ENCODE measurements at regions of chr10 and their contacts with region 1.

Region 1: DNA sequence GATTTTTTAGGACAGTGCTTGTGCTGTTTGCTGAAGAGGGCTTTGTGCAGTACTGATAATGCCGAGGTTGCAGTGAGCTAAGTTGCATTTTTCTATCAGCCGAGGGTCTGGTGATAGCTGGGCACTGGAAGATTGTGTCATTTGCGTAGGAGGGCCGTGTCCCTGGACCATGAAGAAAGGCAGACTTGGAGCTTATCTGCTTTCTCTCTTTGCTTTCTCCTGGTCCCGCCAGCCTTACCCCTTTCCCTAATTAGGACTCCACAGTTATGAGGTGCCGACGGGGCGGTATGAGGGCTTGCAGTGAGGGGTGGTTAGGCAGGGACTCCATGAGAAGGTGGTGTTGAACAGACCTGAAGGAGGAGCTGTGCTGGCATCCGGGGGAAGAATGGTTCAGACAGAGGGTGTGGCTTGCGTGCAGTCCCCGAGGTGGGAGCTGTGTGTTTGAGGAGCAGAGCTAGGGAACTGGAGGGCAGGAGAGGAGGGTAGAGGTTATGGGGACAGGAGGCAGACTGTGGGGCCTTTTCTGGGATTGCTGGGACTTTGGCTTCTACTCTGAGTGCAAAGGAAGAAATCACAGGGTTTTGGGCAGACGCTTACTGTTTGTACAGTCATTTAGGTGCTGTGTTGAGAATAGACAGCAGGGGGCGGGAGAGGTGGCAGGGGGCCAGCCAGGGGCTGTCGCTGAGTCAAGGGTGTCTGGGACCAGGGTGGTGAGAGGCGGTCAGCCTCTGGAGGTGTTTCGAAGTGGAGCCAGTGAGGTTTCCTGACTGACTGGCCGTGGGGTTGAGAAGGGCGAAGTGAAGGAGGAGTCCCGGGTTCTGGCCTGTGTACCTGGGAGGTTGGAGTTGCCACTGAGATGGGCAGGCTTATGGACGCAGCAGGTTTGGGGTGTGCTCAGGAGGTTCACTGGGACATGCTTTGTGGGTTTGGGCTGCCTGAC is 43.4 kb downstream of the PRF1 start:
- DNase-seq: peak; percentile 50 to 88 (median 76)
- ATAC-seq: peak; percentile 95
- H3K4me3 ChIP-seq: peak overlapping the region; percentile 44 to 52
- H3K4me3 Mint-ChIP-seq: peak overlapping the region; percentile 81
- H3K27ac ChIP-seq: peak overlapping the region in 1 of 2 experiments; percentile 46
- H3K27ac Mint-ChIP-seq: peak overlapping the region; percentile 78
- H3K4me1 ChIP-seq: peaks cover 15% of the 10 kb centered on the region
- H3K4me1 Mint-ChIP-seq: peaks cover 20% of the 10 kb centered on the region
- H3K27me3 ChIP-seq: no peaks in the 10 kb centered on the region
- H3K27me3 Mint-ChIP-seq: no peaks in the 10 kb centered on the region
- CTCF ChIP-seq: peak; percentile 84

Region 2: GRCh38 chr10:69874449-69874848 is 684.7 kb before region 1 on chr10:
- CTCF ChIA-PET with region 1: no interaction called
- POLR2A ChIA-PET with region 1: no interaction called
- intact Hi-C with region 1: no loop called
- DNase-seq: no peak
- ATAC-seq: no peak
- H3K4me3 ChIP-seq: no peak overlapping the region
- H3K4me3 Mint-ChIP-seq: no peak overlapping the region
- H3K27ac ChIP-seq: no peak overlapping the region
- H3K27ac Mint-ChIP-seq: no peak overlapping the region
- H3K4me1 ChIP-seq: no peaks in the 10 kb centered on the region
- H3K4me1 Mint-ChIP-seq: no peaks in the 10 kb centered on the region
- H3K27me3 ChIP-seq: no peaks in the 10 kb centered on the region
- H3K27me3 Mint-ChIP-seq: peaks cover 8% of the 10 kb centered on the region
- CTCF ChIP-seq: no peak

Region 3: DNA sequence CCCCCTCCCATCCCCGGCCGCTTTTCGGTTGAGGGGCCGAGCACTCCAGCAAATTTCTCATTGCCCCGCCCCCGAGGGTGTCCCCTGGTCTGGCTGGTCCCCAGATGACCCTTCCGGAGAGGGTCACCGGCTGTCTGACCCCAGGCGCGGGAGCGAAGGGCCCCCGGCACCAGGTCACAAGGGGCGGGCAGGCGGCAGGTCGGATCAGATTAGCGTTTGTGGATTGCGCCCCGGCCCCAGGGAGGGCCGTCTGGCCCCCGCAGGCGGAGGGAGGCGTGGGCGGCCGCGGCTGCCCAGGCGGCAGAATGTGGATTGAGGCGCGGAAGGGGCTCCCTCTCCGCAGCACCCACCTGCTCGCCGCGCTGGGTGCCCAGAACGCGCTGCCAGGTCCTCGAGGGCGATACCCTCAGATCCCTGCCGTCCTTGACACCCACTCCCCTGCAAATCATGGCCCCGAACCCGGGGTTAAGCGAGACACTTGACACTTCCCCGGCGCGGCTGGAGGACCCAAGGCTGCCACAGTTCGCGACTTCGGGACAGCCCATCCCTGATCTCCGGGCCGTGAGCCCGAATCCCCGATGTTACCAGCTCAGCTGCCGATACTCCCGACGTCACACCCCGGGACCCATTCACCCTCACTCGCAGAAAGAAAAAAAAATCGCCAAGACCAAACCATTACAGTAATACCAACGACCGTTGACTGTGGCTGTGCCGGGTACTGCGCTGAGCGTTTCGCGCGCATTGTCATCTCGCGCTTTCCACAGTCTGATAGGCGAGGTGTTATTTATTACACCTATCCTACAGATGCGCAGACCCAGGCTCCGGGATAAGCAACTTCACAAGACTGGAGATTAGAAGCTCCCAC is 118.6 kb before region 1 on chr10:
- CTCF ChIA-PET with region 1: no interaction called
- POLR2A ChIA-PET with region 1: no interaction called
- intact Hi-C with region 1: no loop called
- DNase-seq: no peak
- ATAC-seq: peak; percentile 46
- H3K4me3 ChIP-seq: peak overlapping the region in 1 of 2 experiments; percentile 33
- H3K4me3 Mint-ChIP-seq: peak overlapping the region; percentile 76
- H3K27ac ChIP-seq: no peak overlapping the region
- H3K27ac Mint-ChIP-seq: no peak overlapping the region
- H3K4me1 ChIP-seq: peaks cover 18% of the 10 kb centered on the region
- H3K4me1 Mint-ChIP-seq: peaks cover 15% of the 10 kb centered on the region
- H3K27me3 ChIP-seq: peaks cover 13 to 19% of the 10 kb centered on the region in 2 experiments
- H3K27me3 Mint-ChIP-seq: peaks cover 38% of the 10 kb centered on the region
- CTCF ChIP-seq: no peak

Region 4: DNA sequence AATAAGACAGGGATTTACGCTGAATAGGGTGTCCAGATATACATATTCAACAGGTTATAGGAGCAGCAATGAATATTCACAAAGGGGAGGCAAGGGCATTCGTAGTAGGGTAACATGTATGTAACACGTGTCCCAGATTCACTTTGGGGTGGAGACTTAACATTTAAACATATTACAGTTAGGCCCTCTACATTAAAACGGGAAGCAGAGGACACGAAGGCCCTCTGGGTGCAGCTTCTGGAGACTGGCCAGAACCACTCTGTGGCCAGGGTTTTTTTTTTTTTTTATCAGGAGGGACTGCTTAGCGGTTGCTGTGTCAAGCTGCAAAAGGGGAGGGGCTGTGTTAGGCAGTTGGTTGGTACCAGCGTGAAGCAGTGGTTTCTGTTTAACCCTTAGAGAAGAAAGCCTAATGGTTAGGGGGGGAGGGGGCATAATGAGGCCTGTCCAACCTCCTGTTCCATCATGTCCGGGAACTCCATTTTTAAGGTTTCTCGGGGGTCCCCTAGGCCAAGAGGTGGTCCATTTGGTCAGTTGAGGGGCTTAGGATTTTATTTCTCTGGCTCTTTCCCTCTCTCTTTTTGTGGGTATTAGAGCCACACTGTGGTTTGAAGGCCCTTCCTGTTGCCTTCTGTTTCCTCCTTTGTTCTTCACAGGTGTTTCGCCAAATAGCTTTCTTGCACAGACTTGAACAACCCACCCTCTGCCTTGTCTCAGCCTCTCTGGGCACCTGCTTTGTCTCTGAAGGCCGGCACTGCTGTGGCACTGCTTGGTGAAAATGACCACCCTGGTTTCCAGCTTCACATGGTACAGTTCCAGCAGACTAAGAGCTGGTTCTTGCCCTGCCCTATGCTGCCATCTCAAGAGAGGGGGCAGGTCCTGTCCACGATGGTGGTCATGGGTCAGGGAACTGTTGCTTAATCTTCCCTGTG is 17.0 kb after region 1 on chr10:
- CTCF ChIA-PET with region 1: interaction called, 32 read pairs
- POLR2A ChIA-PET with region 1: interaction called, 5 read pairs
- intact Hi-C with region 1: loop called in 1 of 2 experiments (anchors 1 kb)
- DNase-seq: peak in 3 of 9 experiments; percentile 48 to 79 (median 71)
- ATAC-seq: peak; percentile 6
- H3K4me3 ChIP-seq: peak overlapping the region in 1 of 2 experiments; percentile 19
- H3K4me3 Mint-ChIP-seq: peak overlapping the region; percentile 37
- H3K27ac ChIP-seq: peak overlapping the region in 1 of 2 experiments; percentile 54
- H3K27ac Mint-ChIP-seq: peak overlapping the region; percentile 84
- H3K4me1 ChIP-seq: peaks cover 45% of the 10 kb centered on the region
- H3K4me1 Mint-ChIP-seq: peaks cover 46% of the 10 kb centered on the region
- H3K27me3 ChIP-seq: no peaks in the 10 kb centered on the region
- H3K27me3 Mint-ChIP-seq: no peaks in the 10 kb centered on the region
- CTCF ChIP-seq: no peak

Region 5: DNA sequence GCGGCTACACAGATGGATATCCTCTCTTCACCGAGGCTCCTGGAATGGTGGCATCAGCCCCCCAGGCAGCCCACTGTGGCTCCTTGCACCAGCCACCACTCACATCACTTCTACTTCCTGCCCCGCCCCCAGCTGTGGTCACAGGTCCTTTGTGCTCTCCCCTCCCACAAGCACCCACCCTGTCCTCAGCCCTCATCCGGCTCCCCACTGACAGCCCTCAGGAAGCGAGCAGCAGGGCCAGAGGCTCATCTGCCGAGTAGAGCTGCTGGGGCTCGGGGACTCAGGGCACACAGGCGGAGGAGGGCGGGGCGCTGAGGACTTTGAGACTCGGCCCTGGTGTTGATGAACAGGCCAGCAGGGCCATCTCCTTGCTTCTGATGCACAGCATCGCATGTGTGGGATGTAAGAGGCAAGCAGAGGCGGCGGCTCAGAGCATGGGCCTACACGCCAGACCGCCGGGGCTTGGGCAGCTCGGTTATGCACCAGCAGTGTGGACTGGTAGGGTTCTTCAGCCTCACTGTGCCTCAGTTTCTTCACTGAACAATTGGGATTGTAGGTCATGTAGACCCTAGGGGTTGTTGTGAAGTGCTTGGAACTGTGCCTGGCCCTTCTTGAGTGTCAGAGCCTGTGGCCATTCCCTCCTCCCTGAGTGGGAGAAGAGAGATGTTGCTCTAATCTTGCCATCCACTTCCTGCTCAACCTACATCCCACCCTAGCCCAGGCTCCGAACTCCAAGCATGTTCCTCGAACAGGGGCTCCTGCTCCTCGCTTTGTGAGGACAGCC is 43.7 kb after region 1 on chr10 and contains the start of gene PRF1:
- CTCF ChIA-PET with region 1: interaction called, 8 read pairs
- POLR2A ChIA-PET with region 1: interaction called, 3 read pairs
- intact Hi-C with region 1: loop called (anchors 1 kb)
- DNase-seq: peak; percentile 66 to 94 (median 90)
- ATAC-seq: peak; percentile 90
- H3K4me3 ChIP-seq: peak within 1 kb of the TSS; percentile 71 to 86
- H3K4me3 Mint-ChIP-seq: peak within 1 kb of the TSS; percentile 100
- H3K27ac ChIP-seq: peak within 1 kb of the TSS; percentile 61 to 73
- H3K27ac Mint-ChIP-seq: peak within 1 kb of the TSS; percentile 99
- H3K4me1 ChIP-seq: peaks cover 57% of the 10 kb centered on the region
- H3K4me1 Mint-ChIP-seq: peaks cover 71% of the 10 kb centered on the region
- H3K27me3 ChIP-seq: no peaks in the 10 kb centered on the region
- H3K27me3 Mint-ChIP-seq: no peaks in the 10 kb centered on the region
- CTCF ChIP-seq: no peak
- total RNA-seq, gene PRF1: 56.4 to 57.3 TPM

Region 6: DNA sequence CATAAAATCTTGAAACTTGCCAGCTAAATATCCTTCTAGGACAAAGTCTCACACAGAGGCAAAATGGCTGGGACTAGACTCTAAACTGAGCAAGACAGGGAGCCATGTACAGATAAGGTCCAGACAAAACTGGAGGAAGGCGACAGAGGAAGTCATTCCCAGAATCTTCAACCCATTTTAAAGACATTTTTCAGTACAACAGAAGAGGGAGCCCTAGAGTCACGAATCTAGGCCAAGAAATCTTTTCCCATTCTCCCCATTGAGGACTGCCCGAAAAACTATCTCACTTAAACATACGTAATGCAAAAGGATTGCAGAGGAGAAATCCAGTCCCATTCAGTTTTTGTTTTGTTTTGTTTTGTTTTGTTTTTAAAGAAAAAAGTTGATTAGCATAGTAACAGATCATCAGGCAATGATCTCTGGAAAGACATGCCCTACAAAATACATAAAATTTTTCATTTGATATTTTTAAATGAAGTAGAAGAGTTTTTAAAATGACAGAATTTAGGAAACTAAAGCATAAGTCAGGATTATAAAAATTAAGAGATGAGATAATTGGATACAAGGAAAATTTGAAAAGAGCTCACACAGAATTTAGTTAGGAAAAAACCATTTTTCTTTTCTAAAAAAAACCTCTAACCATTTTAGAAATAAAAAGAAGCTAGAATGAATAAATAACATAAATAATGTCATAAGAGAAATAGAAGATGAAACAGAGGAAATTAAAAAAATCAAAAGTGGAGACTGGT is 60.3 kb after region 1 on chr10:
- CTCF ChIA-PET with region 1: interaction called, 13 read pairs
- POLR2A ChIA-PET with region 1: interaction called, 4 read pairs
- intact Hi-C with region 1: loop called in 1 of 2 experiments (anchors 5 kb)
- DNase-seq: peak in 2 of 9 experiments; percentile 30 to 44
- ATAC-seq: no peak
- H3K4me3 ChIP-seq: no peak overlapping the region
- H3K4me3 Mint-ChIP-seq: no peak overlapping the region
- H3K27ac ChIP-seq: no peak overlapping the region
- H3K27ac Mint-ChIP-seq: peak overlapping the region; percentile 25
- H3K4me1 ChIP-seq: peaks cover 21% of the 10 kb centered on the region
- H3K4me1 Mint-ChIP-seq: peaks cover 41% of the 10 kb centered on the region
- H3K27me3 ChIP-seq: no peaks in the 10 kb centered on the region
- H3K27me3 Mint-ChIP-seq: no peaks in the 10 kb centered on the region
- CTCF ChIP-seq: no peak

Region 7: GRCh38 chr10:70758757-70759514 is 199.8 kb after region 1 on chr10:
- CTCF ChIA-PET with region 1: interaction called, 71 read pairs
- POLR2A ChIA-PET with region 1: interaction called, 3 read pairs
- intact Hi-C with region 1: loop called (anchors 1 kb)
- DNase-seq: peak; percentile 42 to 84 (median 72)
- ATAC-seq: peak; percentile 62
- H3K4me3 ChIP-seq: no peak overlapping the region
- H3K4me3 Mint-ChIP-seq: no peak overlapping the region
- H3K27ac ChIP-seq: no peak overlapping the region
- H3K27ac Mint-ChIP-seq: no peak overlapping the region
- H3K4me1 ChIP-seq: no peaks in the 10 kb centered on the region
- H3K4me1 Mint-ChIP-seq: peaks cover 7% of the 10 kb centered on the region
- H3K27me3 ChIP-seq: no peaks in the 10 kb centered on the region
- H3K27me3 Mint-ChIP-seq: no peaks in the 10 kb centered on the region
- CTCF ChIP-seq: peak; percentile 83

Region 8: GRCh38 chr10:70880077-70880534 is 321.0 kb after region 1 on chr10:
- CTCF ChIA-PET with region 1: interaction called, 3 read pairs
- POLR2A ChIA-PET with region 1: interaction called, 3 read pairs
- intact Hi-C with region 1: loop called (anchors 2 kb)
- DNase-seq: peak; percentile 45 to 87 (median 76)
- ATAC-seq: peak; percentile 92
- H3K4me3 ChIP-seq: no peak overlapping the region
- H3K4me3 Mint-ChIP-seq: no peak overlapping the region
- H3K27ac ChIP-seq: no peak overlapping the region
- H3K27ac Mint-ChIP-seq: no peak overlapping the region
- H3K4me1 ChIP-seq: no peaks in the 10 kb centered on the region
- H3K4me1 Mint-ChIP-seq: peaks cover 2% of the 10 kb centered on the region
- H3K27me3 ChIP-seq: no peaks in the 10 kb centered on the region
- H3K27me3 Mint-ChIP-seq: no peaks in the 10 kb centered on the region
- CTCF ChIP-seq: peak; percentile 84